ENCODE measurements at regions of chr11 and their contacts with region 1.

Region 1: GRCh38 chr11:60756307-60757032 is at the start of gene MS4A15:
- DNase-seq: peak; percentile 50
- H3K4me3 ChIP-seq: no peak within 1 kb of the TSS
- H3K27ac ChIP-seq: no peak within 1 kb of the TSS
- H3K4me1 ChIP-seq: no peaks in the 10 kb centered on the region
- CTCF ChIP-seq: peak; percentile 75
- total RNA-seq, gene MS4A15: not detected in 2 replicates

Region 2: GRCh38 chr11:60345489-60345888 is 411.0 kb before region 1 on chr11:
- CTCF ChIA-PET with region 1: no interaction called
- POLR2A ChIA-PET with region 1: no interaction called
- intact Hi-C with region 1: loop called (anchors 10 kb)
- DNase-seq: peak; percentile 59
- H3K4me3 ChIP-seq: no peak overlapping the region
- H3K27ac ChIP-seq: no peak overlapping the region
- H3K4me1 ChIP-seq: peaks cover 8% of the 10 kb centered on the region
- CTCF ChIP-seq: peak; percentile 89

Region 3: GRCh38 chr11:60739114-60739513 is 17.4 kb before region 1 on chr11:
- CTCF ChIA-PET with region 1: no interaction called
- POLR2A ChIA-PET with region 1: no interaction called
- intact Hi-C with region 1: no loop called
- DNase-seq: no peak
- H3K4me3 ChIP-seq: no peak overlapping the region
- H3K27ac ChIP-seq: no peak overlapping the region
- H3K4me1 ChIP-seq: no peaks in the 10 kb centered on the region
- CTCF ChIP-seq: peak; percentile 35; the same call in 1 of the 2 replicates

Region 4: DNA sequence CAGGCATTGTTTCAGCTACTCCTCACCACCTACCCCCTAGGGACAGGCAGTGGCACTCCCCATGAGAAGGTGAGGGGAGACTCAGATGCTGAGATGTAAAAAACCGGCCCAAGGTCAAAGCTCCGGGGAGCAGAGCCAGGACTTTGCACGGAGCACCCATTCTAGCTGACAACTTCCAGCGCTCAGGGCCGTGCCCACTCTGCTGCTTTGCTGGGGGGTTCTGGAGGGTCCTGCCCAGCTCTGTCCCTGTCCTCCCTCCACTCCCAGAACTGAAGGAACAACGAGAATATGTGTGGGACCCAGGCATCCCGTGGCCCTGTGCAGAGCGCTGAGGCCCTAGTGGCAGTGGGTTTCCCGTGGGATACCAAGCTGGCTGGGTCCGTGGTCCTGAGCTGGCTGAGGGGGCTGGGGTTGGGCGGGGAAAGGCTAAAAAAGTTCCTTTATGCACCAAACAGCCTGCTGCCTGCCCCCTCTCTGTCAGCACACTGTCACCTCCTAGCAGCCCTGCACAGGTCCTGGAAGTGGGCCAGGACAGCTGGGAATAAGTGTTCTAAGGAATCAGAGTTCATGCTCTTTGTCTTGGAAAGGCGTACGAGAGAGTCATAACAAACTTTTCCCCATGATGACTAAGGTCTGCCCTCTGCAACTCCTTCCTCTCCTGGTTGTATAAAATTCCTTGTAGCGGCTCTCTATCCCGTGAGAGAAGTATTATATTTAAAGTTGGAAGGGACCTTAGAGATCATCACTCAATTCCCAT is 30.5 kb after region 1 on chr11:
- CTCF ChIA-PET with region 1: no interaction called
- POLR2A ChIA-PET with region 1: no interaction called
- intact Hi-C with region 1: no loop called
- DNase-seq: no peak
- H3K4me3 ChIP-seq: no peak overlapping the region
- H3K27ac ChIP-seq: no peak overlapping the region
- H3K4me1 ChIP-seq: no peaks in the 10 kb centered on the region
- CTCF ChIP-seq: no peak